SK-N-SH (cell line): ENCODE measurements at regions of chr19 and their contacts with region 1.

Region 1: DNA sequence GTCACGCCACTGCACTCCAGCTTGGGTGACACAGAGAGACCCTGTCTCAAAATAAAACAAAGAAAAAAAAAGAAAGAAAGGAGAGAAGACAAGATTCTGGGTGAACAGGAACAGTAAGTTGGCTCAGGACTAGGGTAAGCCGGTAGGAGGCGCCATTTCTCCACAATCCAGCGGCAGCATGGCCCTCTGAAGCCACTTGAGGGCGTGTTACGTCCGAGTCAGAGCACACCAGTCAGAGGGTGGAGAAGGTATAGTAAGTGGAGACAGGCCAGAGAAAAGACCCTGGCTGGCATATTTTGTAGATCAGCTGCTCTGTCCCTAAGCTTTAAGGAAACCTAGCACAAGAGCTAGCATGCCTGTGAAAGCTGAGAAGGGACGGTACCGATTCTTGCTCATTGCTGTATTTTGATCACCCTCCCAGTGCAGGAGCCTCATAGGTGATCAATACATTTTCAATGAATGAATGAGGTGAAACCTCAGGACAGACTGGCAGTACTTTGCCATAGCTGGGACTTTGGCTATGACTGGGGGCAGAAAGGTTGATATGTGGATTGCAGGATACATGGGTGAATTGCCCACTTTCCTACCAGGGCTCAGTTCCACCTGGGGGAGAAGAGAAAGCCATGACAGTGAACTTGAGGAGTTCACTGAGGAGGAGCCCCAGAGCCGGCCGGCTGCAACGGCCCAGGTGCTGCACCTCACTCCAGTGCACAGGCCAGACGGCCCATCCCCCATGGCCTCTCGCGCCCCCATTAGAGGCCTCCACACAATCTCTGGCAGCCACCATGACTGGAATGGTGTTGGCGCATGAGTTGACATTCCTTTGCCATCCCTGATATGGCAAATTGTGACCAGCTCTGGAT is 23.5 kb downstream of the POU2F2 start:
- DNase-seq: peak; percentile 91
- H3K4me3 ChIP-seq: peak overlapping the region in 1 of 2 experiments; percentile 34; a peak in 1 of 4 replicates
- H3K27ac ChIP-seq: no peak overlapping the region
- H3K4me1 ChIP-seq: peaks cover 0 to 31% of the 10 kb centered on the region in 2 experiments; a peak in 3 of 4 replicates
- H3K27me3 ChIP-seq: no peaks in the 10 kb centered on the region
- CTCF ChIP-seq: peak; percentile 100
- EP300 ChIP-seq: no peak
- RAD21 ChIP-seq: peak; percentile 100

Region 2: DNA sequence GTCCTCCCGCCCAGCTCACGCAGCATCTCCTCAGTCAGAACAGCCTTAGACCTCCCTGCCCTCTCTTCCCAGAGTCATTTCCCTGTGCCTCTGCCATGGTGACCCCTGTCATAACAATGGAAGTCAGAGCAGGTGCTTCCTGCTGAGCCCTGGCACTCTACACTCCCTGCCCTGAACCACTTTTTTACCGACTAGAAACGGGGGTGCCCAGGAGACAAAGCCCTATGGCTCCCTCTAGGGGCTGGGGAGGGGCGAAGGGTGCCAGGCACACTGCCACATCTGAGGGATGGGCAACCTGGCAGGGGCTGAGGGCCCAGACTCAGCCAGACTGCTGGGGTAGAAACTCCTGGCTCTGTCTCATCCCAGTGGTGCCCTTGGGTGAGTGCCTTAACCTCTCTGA is 16.4 kb before region 1 on chr19:
- CTCF ChIA-PET with region 1: interaction called, 27 read pairs
- POLR2A ChIA-PET with region 1: no interaction called
- DNase-seq: peak; percentile 63
- H3K4me3 ChIP-seq: no peak overlapping the region
- H3K27ac ChIP-seq: no peak overlapping the region
- H3K4me1 ChIP-seq: peaks cover 5 to 16% of the 10 kb centered on the region in 2 experiments; a peak in 3 of 4 replicates
- H3K27me3 ChIP-seq: no peaks in the 10 kb centered on the region
- CTCF ChIP-seq: peak; percentile 53
- EP300 ChIP-seq: no peak
- RAD21 ChIP-seq: peak; percentile 32

Region 3: GRCh38 chr19:42132851-42133528 is 24.2 kb after region 1 on chr19:
- CTCF ChIA-PET with region 1: interaction called, 38 read pairs
- POLR2A ChIA-PET with region 1: no interaction called
- DNase-seq: peak; percentile 96
- H3K4me3 ChIP-seq: peak overlapping the region; percentile 24 to 35; a peak in 2 of 4 replicates
- H3K27ac ChIP-seq: no peak overlapping the region
- H3K4me1 ChIP-seq: peaks cover 3 to 22% of the 10 kb centered on the region in 2 experiments; a peak in 2 of 4 replicates
- H3K27me3 ChIP-seq: no peaks in the 10 kb centered on the region; the same call in none of the 2 replicates
- CTCF ChIP-seq: peak; percentile 80
- EP300 ChIP-seq: no peak
- RAD21 ChIP-seq: peak; percentile 92

Region 4: DNA sequence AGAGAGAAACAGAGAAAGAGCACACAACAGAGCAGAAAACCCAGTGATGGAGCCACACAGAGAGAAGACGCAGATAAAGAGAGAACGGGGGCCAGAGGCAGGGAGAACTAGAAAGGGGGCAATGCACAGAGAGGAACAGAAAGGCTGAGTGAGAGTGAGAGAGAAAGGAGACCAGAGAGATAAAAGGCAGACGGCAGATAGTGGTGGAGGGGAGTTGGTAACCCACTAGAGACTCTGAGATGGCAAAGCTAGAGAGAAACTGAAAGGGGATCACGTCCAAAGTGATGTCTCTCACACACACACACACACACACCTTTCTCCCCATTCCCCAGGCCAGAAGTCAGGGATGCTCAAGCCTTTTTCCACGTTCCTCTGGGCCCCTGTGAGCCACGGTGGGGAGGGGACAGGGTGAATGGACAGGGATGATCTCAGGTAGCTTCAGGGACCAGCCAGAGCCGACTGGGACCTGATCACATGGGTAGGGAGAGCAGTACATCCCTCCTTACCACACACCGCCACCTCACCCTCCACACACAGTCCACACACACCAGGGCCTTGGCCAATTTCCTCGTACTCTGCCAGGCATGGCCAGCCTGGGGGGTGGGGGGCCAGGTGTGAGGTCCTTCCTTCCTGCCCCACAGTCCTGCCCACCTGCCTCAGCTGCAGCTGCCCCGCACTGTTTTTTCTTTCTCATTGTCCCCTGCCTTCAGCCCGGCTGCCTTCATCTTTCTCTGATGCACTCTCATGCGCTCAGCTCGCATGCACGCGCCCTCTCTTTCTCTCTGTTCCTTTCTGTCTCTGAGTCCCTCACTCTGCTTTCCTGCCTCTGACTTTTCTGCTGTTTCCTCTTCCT is 45.9 kb after region 1 on chr19:
- CTCF ChIA-PET with region 1: interaction called, 10 read pairs
- POLR2A ChIA-PET with region 1: no interaction called
- DNase-seq: peak; percentile 41
- H3K4me3 ChIP-seq: no peak overlapping the region
- H3K27ac ChIP-seq: no peak overlapping the region
- H3K4me1 ChIP-seq: peaks cover 0 to 16% of the 10 kb centered on the region in 2 experiments; a peak in 1 of 4 replicates
- H3K27me3 ChIP-seq: peaks cover 38% of the 10 kb centered on the region
- CTCF ChIP-seq: no peak
- EP300 ChIP-seq: no peak
- RAD21 ChIP-seq: no peak

Region 5: GRCh38 chr19:42184401-42184861 is 75.7 kb after region 1 on chr19:
- CTCF ChIA-PET with region 1: interaction called, 116 read pairs
- POLR2A ChIA-PET with region 1: no interaction called
- DNase-seq: peak; percentile 85
- H3K4me3 ChIP-seq: no peak overlapping the region; a peak in 1 of 4 replicates
- H3K27ac ChIP-seq: no peak overlapping the region
- H3K4me1 ChIP-seq: no peaks in the 10 kb centered on the region
- H3K27me3 ChIP-seq: peaks cover 5% of the 10 kb centered on the region; the same call in 1 of the 2 replicates
- CTCF ChIP-seq: peak; percentile 89
- EP300 ChIP-seq: no peak
- RAD21 ChIP-seq: peak; percentile 92

Region 6: DNA sequence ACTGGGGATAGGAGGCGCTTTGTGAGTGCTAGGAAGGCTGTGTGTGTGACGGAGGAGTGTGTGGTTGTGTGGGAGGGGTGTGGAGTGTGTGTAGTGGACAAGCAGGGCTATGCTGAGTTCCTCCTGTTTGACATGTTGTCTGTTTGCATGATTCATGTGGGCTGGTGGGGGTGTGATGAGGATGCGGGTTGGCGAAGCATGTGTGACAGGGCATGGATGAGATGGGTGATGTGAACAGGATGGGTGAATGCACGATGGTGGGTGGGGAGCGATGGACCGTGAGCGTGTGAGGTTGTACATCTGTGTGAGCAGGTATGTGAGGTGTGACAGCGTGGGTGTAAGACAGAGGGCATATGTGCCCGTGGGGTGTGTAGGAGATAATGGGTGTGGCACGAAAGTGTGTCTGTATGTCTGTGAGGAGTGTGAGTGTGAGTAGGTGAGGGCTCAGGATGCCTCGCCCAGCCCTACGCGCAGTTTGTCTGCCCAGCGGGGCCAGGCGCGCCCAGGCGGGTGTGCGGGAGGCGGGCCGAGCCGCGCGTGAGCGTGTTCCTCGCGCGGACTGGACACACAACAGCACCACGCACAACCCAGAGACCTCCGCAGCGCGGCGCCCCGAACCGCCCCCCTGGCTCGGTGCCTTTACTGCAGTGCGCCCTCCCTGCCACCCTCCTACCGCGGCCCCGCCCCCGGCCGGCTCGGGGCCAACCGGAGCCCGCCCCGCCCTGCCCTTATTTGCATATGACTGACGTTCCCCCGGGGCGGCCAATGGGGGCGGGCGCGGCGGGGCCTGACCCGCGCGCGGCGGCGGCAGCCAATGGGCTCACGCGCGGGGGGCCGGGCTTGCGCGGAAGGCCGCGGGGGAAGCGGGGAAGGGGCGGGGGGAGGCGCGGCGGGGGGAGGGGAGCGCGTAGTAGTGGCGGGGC is 174.6 kb after region 1 on chr19:
- CTCF ChIA-PET with region 1: interaction called, 10 read pairs
- POLR2A ChIA-PET with region 1: no interaction called
- DNase-seq: peak; percentile 94
- H3K4me3 ChIP-seq: peak overlapping the region; percentile 58 to 60
- H3K27ac ChIP-seq: peak overlapping the region; percentile 93 to 96
- H3K4me1 ChIP-seq: peaks cover 45 to 60% of the 10 kb centered on the region in 2 experiments
- H3K27me3 ChIP-seq: no peaks in the 10 kb centered on the region
- CTCF ChIP-seq: no peak
- EP300 ChIP-seq: no peak
- RAD21 ChIP-seq: no peak